Panc1 (cell line): ENCODE measurements at regions of chr11 and their contacts with region 1.

Region 1: GRCh38 chr11:1733716-1734640 is 16.4 kb downstream of the IFITM10 start:
- DNase-seq: no peak
- ATAC-seq: peak; percentile 20
- H3K4me3 ChIP-seq: no peak overlapping the region
- H3K27ac ChIP-seq: no peak overlapping the region
- H3K4me1 ChIP-seq: no peaks in the 10 kb centered on the region
- H3K27me3 ChIP-seq: peaks cover 5% of the 10 kb centered on the region; the same call in 1 of the 2 replicates
- CTCF ChIP-seq: no peak

Region 2: DNA sequence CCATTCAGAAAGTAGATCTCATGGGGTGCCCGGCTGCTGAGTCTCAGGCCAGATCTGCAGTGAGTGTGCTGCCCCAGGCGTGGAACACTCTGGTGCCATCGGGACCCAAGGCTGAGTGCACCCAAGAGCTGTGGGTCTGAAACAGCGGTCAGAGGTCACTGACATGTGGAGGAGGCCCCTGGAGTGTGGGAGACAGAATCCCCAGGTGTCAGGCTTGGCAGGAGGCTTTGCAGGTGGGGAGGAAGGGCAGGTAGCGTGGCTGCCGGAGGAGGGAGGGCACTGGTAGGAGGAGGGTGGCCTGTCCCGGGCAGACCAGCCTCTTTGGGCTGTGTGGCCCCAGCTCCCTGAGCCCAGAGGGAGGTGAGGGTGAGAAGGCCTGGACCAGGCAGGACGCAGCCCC is 68.7 kb before region 1 on chr11:
- CTCF ChIA-PET with region 1: no interaction called
- POLR2A ChIA-PET with region 1: no interaction called
- in situ Hi-C with region 1: no loop called
- intact Hi-C with region 1: no loop called
- DNase-seq: no peak
- ATAC-seq: no peak
- H3K4me3 ChIP-seq: no peak overlapping the region
- H3K27ac ChIP-seq: no peak overlapping the region
- H3K4me1 ChIP-seq: no peaks in the 10 kb centered on the region
- H3K27me3 ChIP-seq: 0 out of 2 replicates have a peak, but pooled peaks cover 2% of the 10 kb centered on the region
- CTCF ChIP-seq: no peak

Region 3: DNA sequence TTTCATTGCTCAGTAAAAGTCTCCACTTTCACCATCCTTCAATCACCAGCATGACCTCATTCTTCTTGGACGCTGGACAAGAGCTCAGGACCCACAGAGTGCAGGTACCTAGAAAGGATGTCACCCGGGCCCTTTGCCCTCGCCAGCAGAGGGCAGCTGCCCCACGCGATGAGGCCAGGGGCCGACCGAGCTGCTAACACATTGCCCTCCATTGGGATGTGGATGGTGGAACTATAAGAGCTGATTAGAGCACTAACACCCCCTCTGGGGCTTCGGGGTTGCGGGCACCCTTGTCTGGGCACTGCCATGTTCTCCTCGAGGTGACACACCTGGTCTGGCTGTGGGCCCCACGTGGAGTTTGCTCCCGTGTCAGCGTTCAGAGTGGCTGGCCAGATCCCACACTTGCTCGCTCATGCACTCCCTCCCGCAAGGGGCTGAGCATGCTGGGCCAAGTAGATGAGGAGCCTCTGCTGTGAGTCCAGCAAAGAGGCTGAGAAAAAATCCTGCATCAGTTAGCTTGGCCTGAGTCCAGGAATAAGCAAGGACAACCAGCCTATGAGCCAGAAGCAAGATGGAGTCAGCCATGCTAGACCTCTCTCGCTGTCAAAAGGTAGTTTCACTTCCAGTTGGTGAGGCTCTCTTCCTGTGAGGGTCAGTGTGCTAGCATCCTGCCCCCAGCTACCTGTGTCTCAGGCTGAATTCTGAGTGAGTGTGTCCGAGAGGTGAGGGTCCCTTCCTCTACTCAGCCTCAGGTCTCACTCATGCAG is 27.2 kb before region 1 on chr11:
- CTCF ChIA-PET with region 1: no interaction called
- POLR2A ChIA-PET with region 1: interaction called, 20 read pairs
- in situ Hi-C with region 1: no loop called
- intact Hi-C with region 1: no loop called
- DNase-seq: no peak
- ATAC-seq: peak; percentile 85
- H3K4me3 ChIP-seq: no peak overlapping the region
- H3K27ac ChIP-seq: no peak overlapping the region
- H3K4me1 ChIP-seq: no peaks in the 10 kb centered on the region
- H3K27me3 ChIP-seq: no peaks in the 10 kb centered on the region
- CTCF ChIP-seq: peak; percentile 78; the same call in 1 of the 2 replicates

Region 4: DNA sequence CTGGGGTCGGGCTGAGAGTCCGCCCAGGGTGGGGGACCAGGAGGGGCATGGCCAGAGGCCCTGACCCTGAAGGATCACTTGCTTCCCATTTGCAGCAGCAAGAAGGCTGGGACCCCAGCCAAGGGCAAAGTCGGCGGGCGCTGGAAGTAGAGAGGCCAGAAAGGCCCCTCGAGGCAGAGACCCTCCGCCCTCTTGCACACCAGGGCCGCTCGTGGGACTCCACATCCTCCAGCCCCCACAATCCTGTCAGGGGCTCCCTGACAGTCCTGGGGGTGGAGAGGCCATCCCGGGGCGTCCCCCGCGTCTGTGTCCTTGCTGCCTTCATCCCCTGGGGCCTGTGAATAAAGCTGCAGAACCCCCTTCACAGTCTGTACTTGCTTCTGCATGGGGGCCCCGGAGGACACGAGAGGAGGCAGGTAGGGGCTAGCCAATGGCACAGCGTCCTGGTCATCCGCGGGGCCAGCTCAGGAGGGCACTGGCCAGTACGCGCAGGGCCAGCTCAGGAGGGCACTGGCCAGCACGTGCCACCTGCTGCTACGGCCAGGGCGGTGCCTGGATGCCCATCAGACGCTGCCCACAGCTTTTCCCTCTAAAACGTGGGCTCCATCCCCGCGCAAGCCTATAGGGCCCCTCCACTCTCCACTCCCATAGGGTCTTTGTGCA is 204.5 kb after region 1 on chr11:
- CTCF ChIA-PET with region 1: no interaction called
- POLR2A ChIA-PET with region 1: interaction called, 19 read pairs
- in situ Hi-C with region 1: no loop called
- intact Hi-C with region 1: no loop called
- DNase-seq: no peak
- ATAC-seq: peak; percentile 10; the same call in 1 of the 2 replicates
- H3K4me3 ChIP-seq: no peak overlapping the region
- H3K27ac ChIP-seq: no peak overlapping the region
- H3K4me1 ChIP-seq: peaks cover 6% of the 10 kb centered on the region
- H3K27me3 ChIP-seq: no peaks in the 10 kb centered on the region
- CTCF ChIP-seq: no peak